HAP-1 (cell line): ENCODE measurements at regions of chr12 and their contacts with region 1.

Region 1: GRCh38 chr12:109385339-109386067 is 37.8 kb downstream of the MYO1H start:
- DNase-seq: peak; percentile 15 to 63
- H3K4me3 ChIP-seq: no peak overlapping the region
- H3K4me1 ChIP-seq: no peaks in the 10 kb centered on the region
- H3K27me3 ChIP-seq: peaks cover 18% of the 10 kb centered on the region

Region 2: GRCh38 chr12:108090107-108090899 is 1295.2 kb before region 1 on chr12:
- in situ Hi-C with region 1: no loop called
- DNase-seq: peak in 1 of 2 experiments; percentile 11
- H3K4me3 ChIP-seq: no peak overlapping the region
- H3K4me1 ChIP-seq: no peaks in the 10 kb centered on the region
- H3K27me3 ChIP-seq: no peaks in the 10 kb centered on the region

Region 3: GRCh38 chr12:109099431-109100020 is 286.0 kb before region 1 on chr12:
- in situ Hi-C with region 1: loop called (anchors 10 kb)
- DNase-seq: no peak
- H3K4me3 ChIP-seq: no peak overlapping the region
- H3K4me1 ChIP-seq: peaks cover 3% of the 10 kb centered on the region
- H3K27me3 ChIP-seq: no peaks in the 10 kb centered on the region

Region 4: DNA sequence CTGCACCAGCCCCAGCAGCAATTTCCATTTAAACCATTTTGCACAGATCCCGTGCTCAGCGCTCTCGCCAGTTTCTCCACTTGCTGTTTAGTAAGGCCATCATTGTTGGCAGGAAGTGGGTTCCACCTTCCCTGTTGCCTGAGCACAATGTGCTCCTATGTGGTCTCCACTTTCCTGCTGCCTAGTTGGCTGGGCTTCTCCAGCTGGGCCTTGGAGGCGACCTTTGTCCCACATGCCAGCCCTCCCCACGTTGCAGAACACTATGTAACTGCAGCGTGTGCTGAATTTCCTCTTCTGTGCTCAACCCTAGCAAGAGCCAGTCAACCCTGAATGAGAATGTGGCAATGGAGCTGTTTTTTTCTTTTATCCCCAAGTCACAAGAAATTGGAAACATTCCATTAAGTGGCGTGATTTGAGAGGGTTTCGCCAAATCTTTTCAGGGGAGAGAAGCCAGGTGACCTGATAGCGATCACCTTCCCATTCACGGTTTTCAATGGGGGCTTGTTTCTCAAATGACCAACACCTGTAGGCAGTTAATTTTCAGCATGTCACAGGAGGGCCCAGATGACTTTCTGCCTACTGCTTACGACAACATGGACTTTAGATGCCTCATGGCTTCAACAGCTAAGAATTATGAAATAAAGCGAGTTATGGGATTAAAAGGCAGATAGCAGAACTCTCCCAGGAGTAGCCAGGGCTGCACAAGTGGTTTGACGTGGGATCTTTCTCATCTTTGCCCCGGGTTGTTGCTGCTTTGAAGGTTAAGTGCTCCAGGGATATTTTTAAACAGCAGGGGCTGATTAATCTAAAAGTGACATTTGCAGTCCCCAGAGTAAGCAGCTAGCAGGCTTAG is 269.5 kb before region 1 on chr12 and contains the start of gene ACACB:
- in situ Hi-C with region 1: no loop called
- DNase-seq: no peak
- H3K4me3 ChIP-seq: no peak within 1 kb of the TSS
- H3K4me1 ChIP-seq: no peaks in the 10 kb centered on the region
- H3K27me3 ChIP-seq: no peaks in the 10 kb centered on the region

Region 5: DNA sequence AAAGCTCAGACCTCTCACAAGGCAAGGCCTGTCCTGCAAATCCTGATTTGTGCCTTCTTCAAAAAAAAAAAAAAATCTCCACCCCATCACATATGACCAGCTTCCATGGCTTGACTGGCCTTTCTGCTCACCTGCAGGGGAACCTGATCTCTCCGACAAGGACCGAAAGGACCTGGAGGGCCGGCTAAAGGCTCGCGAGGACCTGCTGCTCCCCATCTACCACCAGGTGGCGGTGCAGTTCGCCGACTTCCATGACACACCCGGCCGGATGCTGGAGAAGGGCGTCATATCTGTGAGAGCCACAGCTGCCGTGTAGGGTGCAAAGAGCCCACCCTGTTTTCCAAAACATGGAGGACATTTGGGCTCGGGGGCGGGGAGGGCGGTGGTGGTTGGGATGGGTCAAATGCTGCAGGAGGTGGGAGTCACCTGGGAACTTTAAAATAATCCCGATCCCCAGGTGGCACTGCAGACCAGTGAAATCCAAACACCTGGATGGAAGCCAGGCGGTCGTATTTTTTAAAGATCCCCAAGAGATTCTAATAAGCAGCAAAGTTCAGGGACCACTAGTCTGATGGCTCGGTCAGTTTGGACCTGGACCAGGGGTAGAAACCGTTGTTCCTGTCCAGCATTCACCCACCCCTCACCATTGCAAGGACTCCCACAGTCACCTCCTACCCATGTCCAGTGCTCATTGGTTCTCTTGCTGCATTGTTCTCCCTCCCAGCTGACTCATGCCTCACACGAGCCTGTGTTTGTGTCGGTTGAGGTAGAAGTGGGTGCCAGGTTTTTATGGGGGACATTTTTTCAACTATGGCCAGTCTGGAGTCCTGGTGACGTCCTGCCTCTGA is 121.2 kb before region 1 on chr12:
- in situ Hi-C with region 1: loop called (anchors 5 kb)
- DNase-seq: peak; percentile 69 to 91
- H3K4me3 ChIP-seq: no peak overlapping the region
- H3K4me1 ChIP-seq: peaks cover 4% of the 10 kb centered on the region; the same call in 1 of the 2 replicates
- H3K27me3 ChIP-seq: no peaks in the 10 kb centered on the region

Region 6: DNA sequence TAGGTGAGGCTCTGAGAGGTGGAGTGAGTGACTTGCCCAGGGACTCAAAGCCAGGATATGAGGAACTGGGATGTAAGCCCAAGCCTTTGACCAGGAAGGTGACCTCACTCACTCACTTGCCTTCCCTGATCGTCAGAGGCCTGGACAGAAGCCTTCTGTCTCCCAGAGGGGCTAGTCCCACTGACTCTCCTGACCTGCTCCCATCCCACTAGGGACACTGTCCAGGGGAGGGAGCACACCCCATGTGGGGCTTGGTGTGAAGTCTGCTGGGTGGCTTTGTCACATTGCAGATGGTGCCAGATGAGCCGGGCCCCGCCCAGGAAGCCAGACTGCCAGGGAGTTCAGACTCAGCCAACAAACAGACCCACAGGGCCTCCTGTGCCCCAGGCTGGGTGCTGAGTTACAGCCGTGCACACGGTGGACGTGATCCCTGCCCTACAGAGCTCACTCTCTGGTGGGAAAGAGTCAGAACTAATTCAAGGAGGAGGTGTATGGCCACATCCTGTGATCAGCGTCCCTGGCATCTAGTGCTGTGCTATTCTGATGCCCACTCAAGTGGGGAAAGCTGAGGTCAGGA is 159.5 kb after region 1 on chr12:
- in situ Hi-C with region 1: no loop called
- DNase-seq: no peak
- H3K4me3 ChIP-seq: no peak overlapping the region
- H3K4me1 ChIP-seq: no peaks in the 10 kb centered on the region
- H3K27me3 ChIP-seq: peaks cover 20% of the 10 kb centered on the region

Region 7: DNA sequence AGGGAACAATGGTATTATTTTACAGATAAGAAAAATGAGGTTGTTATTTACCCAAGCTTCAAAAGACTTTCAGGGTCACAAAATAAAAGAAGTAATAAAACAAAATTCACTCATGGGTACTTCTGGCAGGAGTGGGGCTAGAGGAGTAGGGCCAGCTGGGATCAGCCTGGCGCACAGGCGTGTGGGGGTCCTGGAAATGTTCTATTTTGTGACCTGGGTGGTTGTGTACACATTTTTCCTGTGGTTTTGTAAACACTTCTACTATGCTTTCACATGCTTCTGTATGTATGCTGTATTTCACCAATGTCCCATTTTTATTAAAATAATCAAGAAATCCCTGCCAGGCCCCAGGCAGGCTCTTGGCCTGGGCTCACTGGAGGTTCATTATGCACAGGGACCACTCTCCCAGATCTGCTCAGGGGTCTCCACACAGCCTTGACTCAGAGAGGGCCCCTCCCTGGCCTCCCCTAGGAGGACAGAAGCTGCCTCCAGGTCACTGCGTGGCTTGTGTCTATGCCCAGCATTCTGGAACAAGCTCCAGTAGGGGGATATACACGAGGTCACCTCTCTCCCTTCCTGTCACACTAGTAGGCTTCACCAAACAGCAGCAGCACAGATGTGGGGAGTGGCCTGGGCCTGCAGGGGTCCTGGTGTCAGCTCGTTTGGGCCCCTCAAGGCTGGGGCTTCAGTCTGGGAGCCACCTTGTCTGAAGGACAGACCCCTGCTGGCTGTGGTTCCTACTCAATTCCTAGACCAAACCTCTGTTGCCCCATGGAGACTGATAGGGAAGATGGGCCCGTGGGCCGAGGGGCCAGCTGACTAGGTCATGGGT is 980.2 kb after region 1 on chr12:
- in situ Hi-C with region 1: no loop called
- DNase-seq: no peak
- H3K4me3 ChIP-seq: no peak overlapping the region
- H3K4me1 ChIP-seq: no peaks in the 10 kb centered on the region
- H3K27me3 ChIP-seq: no peaks in the 10 kb centered on the region